ENCODE measurements at regions of chr14 and their contacts with region 1.

Region 1: GRCh38 chr14:86038387-86039042 is 508.6 kb downstream of the FLRT2 start:
- DNase-seq: peak in 11 of 14 experiments; percentile 4 to 52 (median 22)
- ATAC-seq: peak; percentile 37
- H3K4me3 ChIP-seq: no peak overlapping the region
- H3K4me3 Mint-ChIP-seq: no peak overlapping the region
- H3K27ac ChIP-seq: no peak overlapping the region
- H3K27ac Mint-ChIP-seq: no peak overlapping the region
- H3K4me1 ChIP-seq: no peaks in the 10 kb centered on the region
- H3K4me1 Mint-ChIP-seq: no peaks in the 10 kb centered on the region
- H3K27me3 ChIP-seq: no peaks in the 10 kb centered on the region
- H3K27me3 Mint-ChIP-seq: no peaks in the 10 kb centered on the region
- CTCF ChIP-seq: peak; percentile 50

Region 2: DNA sequence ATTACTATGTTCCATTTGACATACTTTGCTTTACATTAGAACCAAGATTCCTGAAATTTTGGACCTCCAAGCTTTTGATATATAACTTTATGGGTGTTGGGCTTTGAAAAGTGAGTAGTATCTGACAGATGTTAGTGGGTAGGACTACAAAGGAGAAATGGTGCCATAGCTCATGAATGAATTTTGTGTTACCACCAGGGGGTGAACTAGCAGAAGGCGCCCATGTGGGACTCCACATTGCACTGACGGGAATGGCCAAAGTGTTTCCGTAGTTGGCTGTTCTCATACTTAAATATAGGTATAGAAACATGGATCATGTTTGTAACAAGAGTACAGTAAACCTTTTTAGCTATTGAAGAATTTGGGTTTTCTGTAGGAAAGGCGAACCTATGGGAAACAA is 171.1 kb before region 1 on chr14:
- CTCF ChIA-PET with region 1: no interaction called
- POLR2A ChIA-PET with region 1: no interaction called
- intact Hi-C with region 1: loop called in 1 of 2 experiments (anchors 10 kb)
- DNase-seq: no peak
- ATAC-seq: no peak
- H3K4me3 ChIP-seq: no peak overlapping the region
- H3K4me3 Mint-ChIP-seq: no peak overlapping the region
- H3K27ac ChIP-seq: no peak overlapping the region
- H3K27ac Mint-ChIP-seq: no peak overlapping the region
- H3K4me1 ChIP-seq: no peaks in the 10 kb centered on the region
- H3K4me1 Mint-ChIP-seq: no peaks in the 10 kb centered on the region
- H3K27me3 ChIP-seq: no peaks in the 10 kb centered on the region
- H3K27me3 Mint-ChIP-seq: peaks cover 7% of the 10 kb centered on the region
- CTCF ChIP-seq: no peak